GM12878 (cell line): ENCODE measurements at regions of chrX and their contacts with region 1.

Region 1: DNA sequence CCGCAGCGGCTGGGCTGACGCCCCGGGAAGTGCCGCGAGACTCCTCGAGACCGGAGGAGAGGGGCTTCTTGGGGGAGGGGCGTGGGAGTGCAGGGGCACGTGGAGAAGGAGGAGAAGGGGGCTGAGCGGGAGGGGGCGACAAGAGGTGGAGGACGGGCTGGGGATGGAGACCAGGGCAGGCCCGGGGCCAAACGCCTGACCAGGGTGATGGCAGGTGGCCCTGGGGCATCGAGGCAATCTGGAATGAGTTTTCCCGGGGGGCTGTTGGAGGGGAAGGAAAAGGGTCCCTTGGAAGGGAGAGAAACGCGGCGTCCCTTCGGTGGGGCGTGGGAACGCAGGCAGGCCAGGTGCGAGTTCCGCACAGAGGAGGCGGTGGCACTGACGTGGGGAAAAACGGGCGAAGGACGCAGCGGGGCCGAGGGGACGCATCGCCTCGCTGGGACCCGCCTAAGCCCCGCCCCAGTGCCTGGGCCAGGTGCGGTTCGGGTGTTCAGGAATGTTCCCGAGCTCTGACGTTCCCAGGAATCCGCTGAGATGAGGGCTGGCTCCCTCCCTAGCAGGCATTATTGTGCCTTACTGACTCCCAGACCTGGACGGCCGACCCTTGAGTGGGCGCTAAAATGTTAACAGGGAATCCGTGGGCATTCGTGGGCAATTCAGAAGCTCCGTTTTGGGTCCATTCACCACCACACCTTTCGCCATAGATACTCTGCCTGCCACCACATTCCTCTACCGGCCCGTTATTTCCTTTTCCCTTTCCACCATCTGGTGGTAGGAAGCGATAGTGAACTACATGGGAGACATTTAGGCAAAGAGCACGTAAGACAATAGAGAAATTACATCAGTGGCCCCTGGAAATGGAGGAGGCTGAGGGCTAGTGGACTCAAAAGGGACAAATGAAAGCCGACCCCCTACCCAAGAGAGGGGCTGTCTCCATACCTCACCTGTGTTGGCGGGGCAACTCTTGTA is 795 bp upstream of the SH3KBP1 start:
- DNase-seq: no peak
- ATAC-seq: peak; percentile 10
- H3K4me3 ChIP-seq: peak overlapping the region; percentile 58; the same call in 1 of the 2 replicates
- H3K27ac ChIP-seq: peak overlapping the region; percentile 69
- H3K4me1 ChIP-seq: peaks cover 9% of the 10 kb centered on the region; the same call in 1 of the 2 replicates
- H3K27me3 ChIP-seq: no peaks in the 10 kb centered on the region
- CTCF ChIP-seq: peak; percentile 15 to 60 (median 33); a peak in 4 of 6 replicates
- EP300 ChIP-seq: no peak
- POLR2A ChIP-seq: peak; percentile 54
- RAD21 ChIP-seq: peak; percentile 73

Region 2: DNA sequence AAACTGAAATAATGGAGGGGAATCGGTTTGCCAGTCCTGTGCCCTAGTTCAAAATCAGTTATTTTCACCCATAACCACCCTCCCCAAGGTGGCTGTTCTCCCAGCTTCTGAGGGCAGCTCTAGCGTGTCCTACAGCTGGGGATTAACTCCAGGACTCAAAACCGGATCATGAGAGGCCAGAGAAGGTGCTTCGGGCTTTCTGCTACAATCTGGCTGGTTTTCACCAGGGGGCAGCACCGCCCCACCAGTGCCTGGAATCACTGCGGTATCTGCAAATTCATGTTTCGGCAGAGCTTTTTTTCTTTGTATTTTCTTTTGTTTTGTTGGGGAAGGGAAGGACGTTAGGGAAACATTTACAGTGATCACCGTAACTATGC is 516.0 kb before region 1 on chrX:
- CTCF ChIA-PET with region 1: interaction called, 3 read pairs
- POLR2A ChIA-PET with region 1: no interaction called
- RAD21 ChIA-PET with region 1: interaction called, 4 read pairs
- SMC1A ChIA-PET with region 1: no interaction called
- in situ Hi-C with region 1: loop called (anchors 25 kb)
- intact Hi-C with region 1: no loop called
- DNase-seq: no peak
- ATAC-seq: peak; percentile 94
- H3K4me3 ChIP-seq: peak overlapping the region; percentile 28; the same call in 1 of the 2 replicates
- H3K27ac ChIP-seq: no peak overlapping the region
- H3K4me1 ChIP-seq: no peaks in the 10 kb centered on the region; the same call in 1 of the 2 replicates
- H3K27me3 ChIP-seq: no peaks in the 10 kb centered on the region
- CTCF ChIP-seq: peak; percentile 67 to 81 (median 69)
- EP300 ChIP-seq: no peak
- POLR2A ChIP-seq: no peak
- RAD21 ChIP-seq: peak; percentile 78

Region 3: GRCh38 chrX:19811807-19812604 is 76.2 kb before region 1 on chrX:
- CTCF ChIA-PET with region 1: no interaction called
- POLR2A ChIA-PET with region 1: no interaction called
- RAD21 ChIA-PET with region 1: interaction called, 3 read pairs
- SMC1A ChIA-PET with region 1: interaction called, 15 read pairs
- in situ Hi-C with region 1: no loop called
- intact Hi-C with region 1: loop called (anchors 5 kb)
- DNase-seq: no peak
- ATAC-seq: peak; percentile 41
- H3K4me3 ChIP-seq: no peak overlapping the region
- H3K27ac ChIP-seq: peak overlapping the region; percentile 87
- H3K4me1 ChIP-seq: peaks cover 30% of the 10 kb centered on the region
- H3K27me3 ChIP-seq: no peaks in the 10 kb centered on the region
- CTCF ChIP-seq: no peak
- EP300 ChIP-seq: no peak
- POLR2A ChIP-seq: no peak
- RAD21 ChIP-seq: no peak

Region 4: GRCh38 chrX:19855700-19856381 is 32.4 kb before region 1 on chrX:
- CTCF ChIA-PET with region 1: interaction called, 4 read pairs
- POLR2A ChIA-PET with region 1: interaction called, 6 read pairs
- RAD21 ChIA-PET with region 1: interaction called, 9 read pairs
- SMC1A ChIA-PET with region 1: interaction called, 21 read pairs
- in situ Hi-C with region 1: no loop called
- intact Hi-C with region 1: no loop called
- DNase-seq: no peak
- ATAC-seq: peak; percentile 36
- H3K4me3 ChIP-seq: no peak overlapping the region
- H3K27ac ChIP-seq: peak overlapping the region; percentile 88
- H3K4me1 ChIP-seq: peaks cover 21% of the 10 kb centered on the region
- H3K27me3 ChIP-seq: no peaks in the 10 kb centered on the region
- CTCF ChIP-seq: no peak
- EP300 ChIP-seq: no peak
- POLR2A ChIP-seq: no peak
- RAD21 ChIP-seq: no peak

Region 5: DNA sequence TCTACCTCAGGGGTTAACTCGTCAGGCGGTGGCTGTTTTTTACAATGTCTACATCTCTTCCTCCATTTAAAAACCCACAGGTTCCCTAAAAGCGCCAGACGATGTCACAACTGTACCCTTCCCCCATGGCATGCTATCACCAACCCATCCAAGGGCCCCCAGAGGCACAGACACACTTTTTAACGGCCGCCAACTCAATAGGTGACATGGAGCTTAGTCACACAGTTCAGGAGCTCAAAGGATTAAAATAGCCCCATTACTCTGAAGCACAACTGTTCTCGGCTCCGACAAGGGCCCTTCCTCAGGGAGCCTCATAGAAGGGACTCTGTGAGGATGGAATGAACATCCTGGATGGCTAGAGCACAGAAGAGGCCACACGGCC is 13.2 kb before region 1 on chrX:
- CTCF ChIA-PET with region 1: interaction called, 4 read pairs
- POLR2A ChIA-PET with region 1: interaction called, 19 read pairs
- RAD21 ChIA-PET with region 1: interaction called, 33 read pairs
- SMC1A ChIA-PET with region 1: interaction called, 37 read pairs
- in situ Hi-C with region 1: no loop called
- intact Hi-C with region 1: no loop called
- DNase-seq: no peak
- ATAC-seq: peak; percentile 36
- H3K4me3 ChIP-seq: peak overlapping the region; percentile 46; the same call in 1 of the 2 replicates
- H3K27ac ChIP-seq: peak overlapping the region; percentile 68
- H3K4me1 ChIP-seq: peaks cover 24% of the 10 kb centered on the region
- H3K27me3 ChIP-seq: no peaks in the 10 kb centered on the region
- CTCF ChIP-seq: no peak
- EP300 ChIP-seq: no peak
- POLR2A ChIP-seq: no peak
- RAD21 ChIP-seq: no peak